H1 (cell line): ENCODE measurements at regions of chr3 and their contacts with region 1.

Region 1: DNA sequence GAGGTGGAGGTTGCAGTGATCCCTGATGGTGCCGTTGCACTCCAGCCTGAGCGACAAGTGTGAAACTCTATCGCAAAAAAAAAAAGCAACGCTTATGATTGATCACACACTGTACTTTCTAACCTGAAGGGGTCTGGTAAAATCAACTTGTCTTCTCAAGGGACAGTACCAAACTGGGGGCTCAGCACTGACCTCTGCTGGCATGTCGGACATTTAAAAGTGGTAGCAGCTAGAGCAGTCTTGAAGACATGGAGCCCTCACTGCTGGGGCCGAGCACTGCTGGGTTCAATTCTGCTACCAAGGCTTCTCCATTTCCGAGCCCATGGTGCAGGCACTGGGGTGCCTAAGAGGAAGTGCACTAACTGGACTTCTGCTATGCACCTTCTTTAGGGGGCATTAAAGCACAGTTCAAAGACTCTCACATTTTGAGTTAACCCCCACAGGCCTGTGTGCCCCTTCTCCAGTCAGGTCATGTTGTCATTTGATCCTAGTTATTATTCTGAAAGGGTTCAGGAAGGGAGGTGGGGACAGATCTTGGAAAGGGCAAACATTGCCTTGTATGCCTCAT is 26.4 kb upstream of the LAMP3 start:
- DNase-seq: peak in 1 of 2 experiments; percentile 73
- H3K4me3 ChIP-seq: no peak overlapping the region
- H3K27ac ChIP-seq: no peak overlapping the region
- H3K4me1 ChIP-seq: no peaks in the 10 kb centered on the region
- H3K27me3 ChIP-seq: no peaks in the 10 kb centered on the region
- CTCF ChIP-seq: peak; percentile 58 to 79 (median 76)
- EP300 ChIP-seq: no peak
- POLR2A ChIP-seq: no peak
- RAD21 ChIP-seq: peak; percentile 57 to 68

Region 2: DNA sequence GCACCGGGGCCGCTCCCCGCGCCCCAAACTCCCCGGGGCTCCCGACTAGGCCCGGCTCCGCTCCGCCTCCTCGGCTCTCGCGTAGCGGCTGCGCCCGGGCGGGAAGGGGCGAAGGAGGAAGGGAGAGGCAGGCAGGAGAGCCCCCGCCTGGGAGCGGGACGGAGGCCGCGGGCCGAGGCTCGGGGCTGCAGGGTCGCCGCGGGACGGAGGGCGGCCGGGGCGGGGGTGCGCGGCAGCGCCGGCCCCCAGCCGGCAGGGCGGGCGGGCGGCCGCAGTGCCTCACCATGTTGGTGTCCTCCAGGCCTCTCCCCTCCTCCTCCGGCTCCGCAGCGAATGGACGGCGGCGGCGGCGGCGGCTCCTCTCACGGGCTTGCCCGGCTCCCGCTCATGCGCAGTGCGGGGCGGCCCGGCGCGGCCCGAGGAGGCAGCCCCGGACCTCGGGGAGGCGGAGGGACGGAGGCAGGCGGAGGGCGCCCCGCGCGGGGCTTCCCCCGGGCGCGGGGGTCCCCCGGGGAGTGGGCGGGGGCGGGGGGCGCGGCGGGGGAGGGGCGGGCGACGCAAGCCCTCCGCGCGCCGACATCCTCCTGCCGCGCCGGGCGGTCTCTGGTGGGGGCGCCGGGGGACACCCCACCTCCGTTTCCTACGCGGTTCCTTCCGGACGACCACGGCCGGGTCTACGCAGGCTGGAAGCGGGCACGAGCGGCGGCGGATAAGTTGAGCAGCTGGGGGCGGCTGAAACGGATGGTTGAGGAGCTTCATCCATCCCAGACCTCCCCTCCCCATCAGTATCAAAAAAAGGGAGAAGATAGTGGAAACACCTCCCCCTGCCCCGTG is 208.6 kb before region 1 on chr3 and contains the start of gene DCUN1D1:
- CTCF ChIA-PET with region 1: no interaction called
- POLR2A ChIA-PET with region 1: no interaction called
- DNase-seq: peak; percentile 25 to 91
- H3K4me3 ChIP-seq: peak within 1 kb of the TSS; percentile 76 to 98 (median 85)
- H3K27ac ChIP-seq: peak within 1 kb of the TSS; percentile 66; the same call in 1 of the 2 replicates
- H3K4me1 ChIP-seq: peaks cover 0 to 16% (median 8%) of the 10 kb centered on the region in 4 experiments; a peak in 6 of 7 replicates
- H3K27me3 ChIP-seq: no peaks in the 10 kb centered on the region
- CTCF ChIP-seq: no peak
- EP300 ChIP-seq: no peak
- POLR2A ChIP-seq: peak; percentile 52 to 63
- RAD21 ChIP-seq: no peak
- total RNA-seq, gene DCUN1D1: 70.3 and 76.7 TPM in 2 replicates

Region 3: GRCh38 chr3:183122257-183122932 is 66.6 kb before region 1 on chr3:
- CTCF ChIA-PET with region 1: interaction called, 28 read pairs
- POLR2A ChIA-PET with region 1: no interaction called
- DNase-seq: no peak
- H3K4me3 ChIP-seq: no peak overlapping the region
- H3K27ac ChIP-seq: no peak overlapping the region
- H3K4me1 ChIP-seq: no peaks in the 10 kb centered on the region
- H3K27me3 ChIP-seq: peaks cover 0 to 1% (median under 1%) of the 10 kb centered on the region in 4 experiments; a peak in 3 of 7 replicates
- CTCF ChIP-seq: peak in 2 of 3 experiments; percentile 55 to 73; a peak in 2 of 4 replicates
- EP300 ChIP-seq: no peak
- POLR2A ChIP-seq: no peak
- RAD21 ChIP-seq: peak; percentile 84 to 89

Region 4: DNA sequence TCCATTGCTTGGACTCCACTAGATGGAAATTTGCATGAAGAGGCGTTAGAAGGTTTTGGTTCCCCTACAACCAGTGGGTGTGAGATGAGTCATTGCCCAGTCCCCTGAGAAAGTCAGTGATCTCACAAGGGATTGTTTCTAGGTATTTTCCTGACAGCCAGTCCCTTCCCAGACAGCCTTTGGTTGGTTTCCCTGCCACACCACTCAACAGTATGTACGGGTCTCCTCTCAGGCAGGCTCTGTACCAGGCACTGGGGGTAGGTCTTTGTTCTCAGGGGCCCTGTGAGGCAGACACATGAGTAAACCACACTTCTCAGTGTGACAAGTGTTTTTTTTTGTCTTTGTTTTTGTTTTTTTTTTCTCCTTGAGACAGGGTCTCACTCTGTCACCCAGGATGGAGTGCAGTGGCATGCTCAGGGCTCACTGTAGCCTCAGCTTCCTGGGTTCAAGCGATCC is 30.4 kb before region 1 on chr3:
- CTCF ChIA-PET with region 1: interaction called, 10 read pairs
- POLR2A ChIA-PET with region 1: no interaction called
- DNase-seq: no peak
- H3K4me3 ChIP-seq: no peak overlapping the region
- H3K27ac ChIP-seq: no peak overlapping the region
- H3K4me1 ChIP-seq: peaks cover 0 to 8% (median 2%) of the 10 kb centered on the region in 4 experiments; a peak in 2 of 7 replicates
- H3K27me3 ChIP-seq: peaks cover 3 to 25% (median 20%) of the 10 kb centered on the region in 4 experiments
- CTCF ChIP-seq: no peak
- EP300 ChIP-seq: no peak
- POLR2A ChIP-seq: no peak
- RAD21 ChIP-seq: no peak

Region 5: DNA sequence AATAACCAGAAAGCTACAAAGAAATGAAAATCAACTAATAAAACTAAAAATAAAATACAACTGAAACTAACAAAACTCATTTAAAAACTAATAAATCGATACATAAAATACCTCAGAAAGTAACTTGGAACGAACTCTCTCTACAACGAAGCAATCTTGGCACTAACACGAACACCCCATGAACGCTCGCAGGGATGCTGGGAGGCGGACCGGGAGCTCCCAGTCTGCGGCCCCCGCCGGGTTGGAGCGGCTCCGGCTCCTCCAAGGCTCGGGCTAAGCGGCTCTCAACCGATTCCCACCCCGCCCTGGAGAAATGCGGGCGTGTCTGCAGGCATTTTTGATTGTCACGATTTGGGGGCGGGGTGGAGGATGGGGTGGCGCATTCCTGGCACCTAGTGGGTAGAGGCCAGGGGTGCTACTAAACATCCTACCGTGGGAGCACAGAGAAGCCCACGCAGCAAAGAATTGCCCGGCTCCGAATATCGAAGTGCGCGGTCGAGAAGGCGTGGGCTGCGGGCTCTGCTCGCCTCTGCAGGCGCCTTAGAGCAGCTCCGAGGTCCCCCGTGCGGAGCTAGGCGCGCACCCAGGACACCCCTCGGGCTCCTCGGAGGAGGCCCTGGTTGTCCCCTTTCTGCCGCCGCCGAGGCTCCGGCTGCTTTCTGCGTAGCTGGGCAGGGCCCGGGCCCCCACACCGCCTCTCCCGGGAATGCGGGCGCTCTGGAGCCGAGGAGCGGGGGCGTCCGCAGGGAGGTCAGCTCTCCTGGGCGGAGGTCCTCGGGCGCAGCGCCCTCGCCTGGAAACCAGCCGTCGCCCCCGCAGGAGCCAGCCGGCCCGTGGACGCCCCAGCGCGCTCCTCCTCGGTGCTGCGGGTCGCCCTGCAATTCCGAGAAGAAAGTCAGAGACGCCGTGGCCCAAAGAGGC is 10.1 kb before region 1 on chr3:
- CTCF ChIA-PET with region 1: interaction called, 14 read pairs
- POLR2A ChIA-PET with region 1: no interaction called
- DNase-seq: peak in 1 of 2 experiments; percentile 77
- H3K4me3 ChIP-seq: peak overlapping the region; percentile 43 to 66 (median 56)
- H3K27ac ChIP-seq: no peak overlapping the region
- H3K4me1 ChIP-seq: peaks cover 0 to 8% (median 1%) of the 10 kb centered on the region in 4 experiments; a peak in 3 of 7 replicates
- H3K27me3 ChIP-seq: peaks cover 0 to 25% (median 20%) of the 10 kb centered on the region in 4 experiments; a peak in 6 of 7 replicates
- CTCF ChIP-seq: peak; percentile 23 to 30 (median 25); a peak in 3 of 4 replicates
- EP300 ChIP-seq: no peak
- POLR2A ChIP-seq: no peak
- RAD21 ChIP-seq: peak in 1 of 2 experiments; percentile 40; a peak in 1 of 4 replicates

Region 6: DNA sequence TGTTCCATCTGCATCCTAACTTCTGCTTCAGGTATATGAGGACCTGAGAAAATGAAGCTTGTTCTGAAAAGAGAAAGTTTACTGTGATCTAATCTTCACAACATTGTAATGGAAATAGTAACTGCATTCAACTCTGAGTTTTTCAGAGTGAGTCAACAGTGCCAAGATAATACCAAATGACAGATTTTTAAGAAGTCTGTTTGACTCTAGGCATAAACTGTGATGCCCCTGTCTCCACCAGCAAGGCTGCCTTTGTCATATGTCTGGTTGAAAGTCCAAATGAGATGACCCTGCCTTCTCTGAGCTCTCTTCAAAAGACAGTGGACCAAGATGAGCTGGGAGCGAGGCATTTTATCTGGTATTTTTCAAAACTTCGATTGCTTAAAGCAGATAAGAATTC is 19.3 kb after region 1 on chr3:
- CTCF ChIA-PET with region 1: interaction called, 12 read pairs
- POLR2A ChIA-PET with region 1: no interaction called
- DNase-seq: no peak
- H3K4me3 ChIP-seq: no peak overlapping the region
- H3K27ac ChIP-seq: no peak overlapping the region
- H3K4me1 ChIP-seq: 0 out of 7 replicates have a peak, but pooled peaks cover 0 to 3% (median 0%) of the 10 kb centered on the region in 4 experiments
- H3K27me3 ChIP-seq: no peaks in the 10 kb centered on the region
- CTCF ChIP-seq: no peak
- EP300 ChIP-seq: no peak
- POLR2A ChIP-seq: no peak
- RAD21 ChIP-seq: no peak

Region 7: DNA sequence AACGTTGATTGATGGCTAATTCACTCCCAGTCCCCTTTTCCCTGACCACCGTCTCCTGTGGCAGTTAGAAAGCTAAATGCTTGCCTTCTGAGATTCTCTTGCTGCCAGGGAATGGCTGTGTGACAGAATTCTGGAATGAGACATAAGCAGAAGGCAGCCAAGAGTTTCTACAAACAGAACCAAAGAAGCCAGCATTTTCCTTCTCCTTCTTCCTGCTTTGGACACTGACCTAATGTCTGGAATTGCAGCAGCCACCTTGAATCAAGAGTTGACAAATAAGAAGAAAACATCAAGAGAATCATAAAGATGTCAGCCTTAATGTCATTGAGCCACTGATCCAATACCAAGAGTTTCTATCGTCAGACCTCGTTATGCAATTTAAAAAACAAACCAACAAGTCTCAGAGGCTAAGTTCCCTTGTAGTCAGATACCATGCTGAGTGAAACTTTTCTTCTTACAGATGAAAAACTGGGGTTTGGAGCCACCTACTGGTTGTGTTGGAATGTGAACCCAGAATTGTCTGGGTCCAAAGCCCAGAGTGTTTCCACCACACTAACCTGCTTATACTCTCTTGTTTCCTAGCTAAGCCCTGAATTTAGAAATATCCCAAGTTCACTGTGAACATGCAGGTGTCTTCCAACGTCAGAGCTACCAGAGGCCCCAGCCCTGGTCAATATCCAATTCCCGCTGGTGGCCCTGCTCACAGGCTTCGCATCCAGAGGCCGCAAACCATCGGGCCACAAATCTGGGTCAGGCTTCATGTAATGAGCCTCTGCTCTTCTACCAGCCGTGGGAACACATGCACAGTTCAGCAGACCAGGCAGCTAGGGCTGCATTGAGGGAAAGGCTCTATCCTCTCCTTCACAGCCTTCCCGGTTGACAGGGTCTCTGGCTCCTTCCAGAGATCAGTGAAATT is 197.0 kb after region 1 on chr3:
- CTCF ChIA-PET with region 1: interaction called, 222 read pairs
- POLR2A ChIA-PET with region 1: no interaction called
- DNase-seq: peak in 1 of 2 experiments; percentile 72
- H3K4me3 ChIP-seq: no peak overlapping the region
- H3K27ac ChIP-seq: no peak overlapping the region
- H3K4me1 ChIP-seq: peaks cover 0 to 19% (median 4%) of the 10 kb centered on the region in 4 experiments; a peak in 3 of 7 replicates
- H3K27me3 ChIP-seq: no peaks in the 10 kb centered on the region
- CTCF ChIP-seq: peak; percentile 5 to 83 (median 74)
- EP300 ChIP-seq: no peak
- POLR2A ChIP-seq: no peak
- RAD21 ChIP-seq: peak; percentile 81 to 88

Region 8: GRCh38 chr3:183392186-183393034 is 203.4 kb after region 1 on chr3:
- CTCF ChIA-PET with region 1: interaction called, 10 read pairs
- POLR2A ChIA-PET with region 1: no interaction called
- DNase-seq: no peak
- H3K4me3 ChIP-seq: no peak overlapping the region
- H3K27ac ChIP-seq: no peak overlapping the region
- H3K4me1 ChIP-seq: peaks cover 0 to 3% (median 3%) of the 10 kb centered on the region in 4 experiments; a peak in 3 of 7 replicates
- H3K27me3 ChIP-seq: no peaks in the 10 kb centered on the region
- CTCF ChIP-seq: no peak
- EP300 ChIP-seq: no peak
- POLR2A ChIP-seq: no peak
- RAD21 ChIP-seq: no peak